PC-9 (cell line): ENCODE measurements at regions of chr22 and their contacts with region 1.

Region 1: DNA sequence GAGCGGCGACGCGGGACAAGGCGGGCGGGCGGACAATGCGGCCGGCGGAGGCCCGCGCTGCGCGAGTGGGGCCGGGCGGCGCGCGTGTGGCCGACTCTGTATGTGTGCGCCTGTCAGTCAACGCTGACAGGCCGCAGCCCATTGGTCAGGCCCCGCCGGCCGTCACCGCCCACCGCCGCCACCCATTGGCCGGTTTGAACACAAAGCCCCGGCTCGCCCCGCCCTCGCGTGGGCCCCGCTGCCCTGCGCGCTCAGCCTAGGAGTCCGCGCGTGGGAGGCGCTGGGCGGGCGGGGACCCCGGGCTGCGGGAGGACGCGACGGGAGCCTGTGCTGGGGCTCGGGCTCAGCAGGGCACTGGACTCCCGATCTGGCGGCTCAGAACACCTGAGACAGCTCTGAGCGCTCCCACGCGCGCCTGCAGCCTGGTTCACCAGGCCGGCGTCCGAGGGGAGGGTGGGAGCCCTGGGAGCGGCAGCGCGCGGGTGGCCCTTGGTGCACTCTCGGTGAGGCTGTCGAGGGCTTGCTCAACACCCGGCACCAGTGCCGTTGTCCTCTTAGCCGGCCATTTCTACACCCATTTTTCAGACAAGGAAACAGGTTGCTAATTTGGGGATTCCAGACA is at the start of gene SUN2:
- DNase-seq: peak; percentile 71 to 90
- H3K4me3 ChIP-seq: peak within 1 kb of the TSS; percentile 89
- H3K27ac ChIP-seq: peak within 1 kb of the TSS; percentile 87
- H3K4me1 ChIP-seq: peaks cover 55% of the 10 kb centered on the region
- H3K27me3 ChIP-seq: no peaks in the 10 kb centered on the region
- CTCF ChIP-seq: no peak
- total RNA-seq, gene SUN2: 169 and 220 TPM in 2 replicates

Region 2: GRCh38 chr22:38696606-38697424 is 59.2 kb before region 1 on chr22:
- CTCF ChIA-PET with region 1: no interaction called
- POLR2A ChIA-PET with region 1: interaction called, 12 read pairs
- intact Hi-C with region 1: loop called (anchors 2 kb)
- DNase-seq: peak; percentile 64 to 89
- H3K4me3 ChIP-seq: peak overlapping the region; percentile 82
- H3K27ac ChIP-seq: peak overlapping the region; percentile 88
- H3K4me1 ChIP-seq: peaks cover 56% of the 10 kb centered on the region
- H3K27me3 ChIP-seq: no peaks in the 10 kb centered on the region
- CTCF ChIP-seq: no peak

Region 3: DNA sequence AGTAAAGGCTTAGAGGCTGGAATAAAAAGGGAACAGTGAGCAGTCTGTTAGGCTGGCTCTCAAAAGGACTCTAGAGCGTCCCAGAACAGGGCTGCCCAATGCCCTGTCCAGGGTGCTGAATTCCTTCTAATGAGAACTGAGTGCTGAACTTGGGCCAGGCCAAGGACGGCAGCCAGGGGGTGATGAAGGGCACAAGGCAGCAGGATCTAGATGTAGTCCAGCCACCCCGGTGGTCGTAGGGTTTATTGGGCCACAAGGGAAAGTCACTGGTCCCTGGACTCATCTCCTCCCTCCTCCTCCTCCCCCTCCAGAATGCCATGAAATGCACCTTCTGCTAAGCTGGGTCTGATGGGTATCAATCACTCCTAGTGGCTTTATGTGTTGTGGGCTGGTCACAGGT is 68.6 kb after region 1 on chr22:
- CTCF ChIA-PET with region 1: no interaction called
- POLR2A ChIA-PET with region 1: no interaction called
- intact Hi-C with region 1: no loop called
- DNase-seq: peak in 1 of 2 experiments; percentile 62
- H3K4me3 ChIP-seq: no peak overlapping the region
- H3K27ac ChIP-seq: no peak overlapping the region
- H3K4me1 ChIP-seq: peaks cover 9% of the 10 kb centered on the region
- H3K27me3 ChIP-seq: peaks cover 9% of the 10 kb centered on the region
- CTCF ChIP-seq: peak; percentile 52; the same call in 1 of the 2 replicates